B cell (primary cell): ENCODE measurements at regions of chr6 and their contacts with region 1.

Region 1: GRCh38 chr6:16332175-16332542 is 93.8 kb downstream of the GMPR start:
- DNase-seq: peak; percentile 88
- ATAC-seq: peak; percentile 95
- H3K4me3 ChIP-seq: peak overlapping the region in 1 of 5 experiments; percentile 31
- H3K4me3 Mint-ChIP-seq: no peak overlapping the region
- H3K27ac ChIP-seq: peak overlapping the region; percentile 60 to 67
- H3K27ac Mint-ChIP-seq: no peak overlapping the region
- H3K4me1 ChIP-seq: peaks cover 12% of the 10 kb centered on the region in 2 donors
- H3K4me1 Mint-ChIP-seq: peaks cover 9% of the 10 kb centered on the region
- H3K27me3 ChIP-seq: no peaks in the 10 kb centered on the region
- H3K27me3 Mint-ChIP-seq: no peaks in the 10 kb centered on the region
- CTCF ChIP-seq: peak; percentile 85

Region 2: GRCh38 chr6:15948930-15949900 is 382.9 kb before region 1 on chr6:
- CTCF ChIA-PET with region 1: no interaction called
- POLR2A ChIA-PET with region 1: no interaction called
- intact Hi-C with region 1: no loop called
- DNase-seq: no peak
- ATAC-seq: no peak
- H3K4me3 ChIP-seq: no peak overlapping the region
- H3K4me3 Mint-ChIP-seq: no peak overlapping the region
- H3K27ac ChIP-seq: no peak overlapping the region
- H3K27ac Mint-ChIP-seq: no peak overlapping the region
- H3K4me1 ChIP-seq: no peaks in the 10 kb centered on the region
- H3K4me1 Mint-ChIP-seq: peaks cover 15% of the 10 kb centered on the region
- H3K27me3 ChIP-seq: no peaks in the 10 kb centered on the region
- H3K27me3 Mint-ChIP-seq: no peaks in the 10 kb centered on the region
- CTCF ChIP-seq: no peak

Region 3: GRCh38 chr6:16238057-16238962 is 93.8 kb before region 1 on chr6 and contains the start of gene GMPR:
- CTCF ChIA-PET with region 1: no interaction called
- POLR2A ChIA-PET with region 1: no interaction called
- intact Hi-C with region 1: no loop called
- DNase-seq: peak; percentile 71
- ATAC-seq: peak; percentile 84
- H3K4me3 ChIP-seq: peak within 1 kb of the TSS; percentile 42 to 76 (median 60)
- H3K4me3 Mint-ChIP-seq: peak within 1 kb of the TSS; percentile 95
- H3K27ac ChIP-seq: no peak within 1 kb of the TSS
- H3K27ac Mint-ChIP-seq: peak within 1 kb of the TSS; percentile 3
- H3K4me1 ChIP-seq: peaks cover 27 to 34% of the 10 kb centered on the region in 2 donors
- H3K4me1 Mint-ChIP-seq: peaks cover 38% of the 10 kb centered on the region
- H3K27me3 ChIP-seq: peaks cover 0 to 17% (median 8%) of the 10 kb centered on the region in 4 experiments
- H3K27me3 Mint-ChIP-seq: peaks cover 23% of the 10 kb centered on the region
- CTCF ChIP-seq: no peak
- total RNA-seq, gene GMPR: 0.41 TPM in 1 of 2 replicates, not detected in the other

Region 4: DNA sequence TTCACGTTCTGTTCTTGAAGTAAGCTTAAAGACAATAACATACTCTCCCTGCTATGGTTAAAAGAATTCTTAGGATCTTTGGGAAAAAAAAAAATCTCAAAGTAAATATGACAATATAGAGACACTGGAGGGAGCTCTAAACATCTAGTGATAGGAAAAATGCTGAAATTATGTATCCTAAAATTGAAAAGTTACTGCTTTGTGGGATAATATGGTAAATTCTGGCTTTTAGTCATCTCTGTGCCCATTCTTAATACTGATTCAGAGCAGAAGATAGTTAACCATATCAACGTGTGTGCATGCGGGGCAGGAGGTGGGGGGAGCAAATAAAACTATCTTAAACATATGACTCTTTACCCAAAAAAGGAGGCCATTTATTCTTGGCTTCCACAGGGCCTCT is 71.7 kb after region 1 on chr6:
- CTCF ChIA-PET with region 1: interaction called, 45 read pairs
- POLR2A ChIA-PET with region 1: no interaction called
- intact Hi-C with region 1: loop called (anchors 1 kb)
- DNase-seq: no peak
- ATAC-seq: no peak
- H3K4me3 ChIP-seq: no peak overlapping the region
- H3K4me3 Mint-ChIP-seq: no peak overlapping the region
- H3K27ac ChIP-seq: no peak overlapping the region
- H3K27ac Mint-ChIP-seq: no peak overlapping the region
- H3K4me1 ChIP-seq: peaks cover 10 to 26% of the 10 kb centered on the region in 2 donors
- H3K4me1 Mint-ChIP-seq: peaks cover 38% of the 10 kb centered on the region
- H3K27me3 ChIP-seq: no peaks in the 10 kb centered on the region
- H3K27me3 Mint-ChIP-seq: no peaks in the 10 kb centered on the region
- CTCF ChIP-seq: no peak

Region 5: DNA sequence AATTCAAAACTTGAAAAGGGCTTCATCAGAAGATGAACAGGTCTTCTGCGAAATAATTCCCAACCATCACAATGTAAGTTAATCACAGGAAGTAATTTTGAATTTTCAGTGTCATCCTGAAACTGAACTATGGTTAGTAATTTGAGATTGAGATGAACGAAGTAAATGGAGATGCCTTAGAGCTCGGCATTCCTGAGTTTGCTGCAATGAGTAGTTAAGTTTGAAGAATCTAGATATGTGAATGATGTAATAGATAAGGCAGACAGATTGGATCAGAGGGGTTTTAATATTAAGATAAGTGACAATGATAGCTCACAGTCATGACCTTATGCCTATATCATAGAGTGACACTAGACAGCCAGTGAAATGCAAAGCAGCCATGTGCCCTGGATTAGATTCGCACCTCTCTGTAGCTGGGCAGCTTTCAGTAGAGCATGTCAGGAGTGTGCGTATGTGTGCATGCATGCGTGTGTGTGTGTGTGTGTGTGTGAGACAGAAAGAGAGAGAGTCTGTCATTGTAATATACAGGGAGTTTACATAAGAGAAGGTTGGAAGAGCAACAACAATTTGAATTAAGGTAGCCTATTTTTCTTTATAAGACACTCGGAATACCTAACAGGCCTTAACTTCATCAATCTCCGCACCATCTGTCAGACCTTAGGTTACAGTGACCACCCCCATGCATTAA is 139.2 kb after region 1 on chr6:
- CTCF ChIA-PET with region 1: interaction called, 10 read pairs
- POLR2A ChIA-PET with region 1: no interaction called
- intact Hi-C with region 1: no loop called
- DNase-seq: peak; percentile 64
- ATAC-seq: peak; percentile 83
- H3K4me3 ChIP-seq: no peak overlapping the region
- H3K4me3 Mint-ChIP-seq: peak overlapping the region; percentile 58
- H3K27ac ChIP-seq: peak overlapping the region in 1 of 2 donors; percentile 6
- H3K27ac Mint-ChIP-seq: peak overlapping the region; percentile 71
- H3K4me1 ChIP-seq: peaks cover 14 to 39% of the 10 kb centered on the region in 2 donors
- H3K4me1 Mint-ChIP-seq: peaks cover 56% of the 10 kb centered on the region
- H3K27me3 ChIP-seq: no peaks in the 10 kb centered on the region
- H3K27me3 Mint-ChIP-seq: no peaks in the 10 kb centered on the region
- CTCF ChIP-seq: no peak

Region 6: GRCh38 chr6:16712931-16713484 is 380.8 kb after region 1 on chr6:
- CTCF ChIA-PET with region 1: no interaction called
- POLR2A ChIA-PET with region 1: no interaction called
- intact Hi-C with region 1: loop called (anchors 5 kb)
- DNase-seq: peak; percentile 42
- ATAC-seq: peak; percentile 51
- H3K4me3 ChIP-seq: peak overlapping the region; percentile 0 to 55 (median 21)
- H3K4me3 Mint-ChIP-seq: peak overlapping the region; percentile 71
- H3K27ac ChIP-seq: no peak overlapping the region
- H3K27ac Mint-ChIP-seq: peak overlapping the region; percentile 78
- H3K4me1 ChIP-seq: peaks cover 7 to 16% of the 10 kb centered on the region in 2 donors
- H3K4me1 Mint-ChIP-seq: peaks cover 21% of the 10 kb centered on the region
- H3K27me3 ChIP-seq: no peaks in the 10 kb centered on the region
- H3K27me3 Mint-ChIP-seq: peaks cover 3% of the 10 kb centered on the region
- CTCF ChIP-seq: peak; percentile 55

Region 7: DNA sequence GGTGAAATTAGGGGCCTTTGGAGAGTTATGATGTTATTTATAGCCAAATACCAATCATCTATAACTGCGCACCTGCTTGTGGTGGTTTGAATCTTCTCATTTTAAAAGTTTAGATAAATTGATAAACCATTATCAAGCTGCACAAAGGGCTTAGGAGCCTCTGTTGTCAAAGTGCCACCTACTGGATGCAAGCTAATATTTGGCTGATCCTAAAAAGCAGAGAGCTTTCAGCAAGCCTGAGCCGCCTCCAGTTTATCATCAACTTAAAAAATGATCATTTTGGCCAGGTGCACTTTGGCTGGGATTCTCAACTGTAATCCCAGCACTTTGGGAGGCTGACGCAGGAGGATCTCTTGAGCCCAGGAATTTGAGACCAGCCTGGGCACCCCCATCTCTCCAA is 487.6 kb after region 1 on chr6:
- CTCF ChIA-PET with region 1: no interaction called
- POLR2A ChIA-PET with region 1: no interaction called
- intact Hi-C with region 1: loop called (anchors 1 kb)
- DNase-seq: no peak
- ATAC-seq: no peak
- H3K4me3 ChIP-seq: no peak overlapping the region
- H3K4me3 Mint-ChIP-seq: no peak overlapping the region
- H3K27ac ChIP-seq: no peak overlapping the region
- H3K27ac Mint-ChIP-seq: no peak overlapping the region
- H3K4me1 ChIP-seq: peaks cover 2 to 5% of the 10 kb centered on the region in 2 donors
- H3K4me1 Mint-ChIP-seq: peaks cover 5% of the 10 kb centered on the region
- H3K27me3 ChIP-seq: peaks cover 0 to 11% (median 3%) of the 10 kb centered on the region in 4 experiments
- H3K27me3 Mint-ChIP-seq: peaks cover 22% of the 10 kb centered on the region
- CTCF ChIP-seq: no peak